AG04450 (cell line): ENCODE measurements at regions of chr5 and their contacts with region 1.

Region 1: GRCh38 chr5:40904205-40904993 is 4.9 kb upstream of the C7 start:
- DNase-seq: peak; percentile 65
- H3K4me3 ChIP-seq: no peak overlapping the region
- H3K27ac ChIP-seq: no peak overlapping the region
- H3K27me3 ChIP-seq: no peaks in the 10 kb centered on the region
- CTCF ChIP-seq: peak; percentile 100

Region 2: GRCh38 chr5:40958811-40959210 is 54.4 kb after region 1 on chr5:
- CTCF ChIA-PET with region 1: interaction called, 10 read pairs
- POLR2A ChIA-PET with region 1: no interaction called
- DNase-seq: no peak
- H3K4me3 ChIP-seq: no peak overlapping the region
- H3K27ac ChIP-seq: no peak overlapping the region
- H3K27me3 ChIP-seq: no peaks in the 10 kb centered on the region
- CTCF ChIP-seq: no peak

Region 3: DNA sequence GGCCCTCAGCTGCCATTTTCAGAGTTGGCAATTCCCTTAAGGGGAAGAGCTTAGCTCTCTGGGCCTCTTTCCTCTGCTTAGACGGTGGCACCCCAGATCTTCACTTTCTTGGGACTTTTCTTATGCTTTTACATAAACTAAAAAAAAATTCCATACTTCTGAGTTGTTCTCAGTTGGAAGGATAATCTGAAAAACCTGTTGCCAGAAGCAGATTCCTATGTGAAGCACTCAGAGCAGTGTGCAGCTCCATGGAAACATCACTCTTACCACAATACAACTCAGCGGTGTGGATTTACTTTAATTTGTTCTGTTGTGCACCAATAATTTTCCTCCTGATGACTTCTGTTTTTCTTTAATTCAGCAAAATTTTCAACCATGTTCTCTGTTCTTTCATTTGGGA is 210.9 kb after region 1 on chr5:
- CTCF ChIA-PET with region 1: interaction called, 31 read pairs
- POLR2A ChIA-PET with region 1: no interaction called
- DNase-seq: peak; percentile 76
- H3K4me3 ChIP-seq: no peak overlapping the region
- H3K27ac ChIP-seq: peak overlapping the region; percentile 93
- H3K27me3 ChIP-seq: no peaks in the 10 kb centered on the region
- CTCF ChIP-seq: no peak

Region 4: GRCh38 chr5:41252036-41252435 is 347.6 kb after region 1 on chr5:
- CTCF ChIA-PET with region 1: interaction called, 11 read pairs
- POLR2A ChIA-PET with region 1: no interaction called
- DNase-seq: peak; percentile 20
- H3K4me3 ChIP-seq: no peak overlapping the region
- H3K27ac ChIP-seq: peak overlapping the region; percentile 55
- H3K27me3 ChIP-seq: no peaks in the 10 kb centered on the region
- CTCF ChIP-seq: no peak

Region 5: GRCh38 chr5:41334758-41335157 is 430.4 kb after region 1 on chr5:
- CTCF ChIA-PET with region 1: interaction called, 31 read pairs
- POLR2A ChIA-PET with region 1: no interaction called
- DNase-seq: no peak
- H3K4me3 ChIP-seq: no peak overlapping the region
- H3K27ac ChIP-seq: no peak overlapping the region
- H3K27me3 ChIP-seq: no peaks in the 10 kb centered on the region
- CTCF ChIP-seq: no peak

Region 6: GRCh38 chr5:41637869-41638268 is 733.5 kb after region 1 on chr5:
- CTCF ChIA-PET with region 1: interaction called, 37 read pairs
- POLR2A ChIA-PET with region 1: no interaction called
- DNase-seq: no peak
- H3K4me3 ChIP-seq: no peak overlapping the region
- H3K27ac ChIP-seq: no peak overlapping the region
- H3K27me3 ChIP-seq: no peaks in the 10 kb centered on the region
- CTCF ChIP-seq: peak; percentile 40